ENCODE measurements at regions of chr16 and their contacts with region 1.

Region 1: GRCh38 chr16:86874141-86874540 is 295.8 kb downstream of the FOXL1 start:
- DNase-seq: peak; percentile 31
- H3K4me3 ChIP-seq: no peak overlapping the region
- H3K27ac ChIP-seq: no peak overlapping the region
- H3K4me1 ChIP-seq: no peaks in the 10 kb centered on the region
- CTCF ChIP-seq: peak; percentile 80

Region 2: DNA sequence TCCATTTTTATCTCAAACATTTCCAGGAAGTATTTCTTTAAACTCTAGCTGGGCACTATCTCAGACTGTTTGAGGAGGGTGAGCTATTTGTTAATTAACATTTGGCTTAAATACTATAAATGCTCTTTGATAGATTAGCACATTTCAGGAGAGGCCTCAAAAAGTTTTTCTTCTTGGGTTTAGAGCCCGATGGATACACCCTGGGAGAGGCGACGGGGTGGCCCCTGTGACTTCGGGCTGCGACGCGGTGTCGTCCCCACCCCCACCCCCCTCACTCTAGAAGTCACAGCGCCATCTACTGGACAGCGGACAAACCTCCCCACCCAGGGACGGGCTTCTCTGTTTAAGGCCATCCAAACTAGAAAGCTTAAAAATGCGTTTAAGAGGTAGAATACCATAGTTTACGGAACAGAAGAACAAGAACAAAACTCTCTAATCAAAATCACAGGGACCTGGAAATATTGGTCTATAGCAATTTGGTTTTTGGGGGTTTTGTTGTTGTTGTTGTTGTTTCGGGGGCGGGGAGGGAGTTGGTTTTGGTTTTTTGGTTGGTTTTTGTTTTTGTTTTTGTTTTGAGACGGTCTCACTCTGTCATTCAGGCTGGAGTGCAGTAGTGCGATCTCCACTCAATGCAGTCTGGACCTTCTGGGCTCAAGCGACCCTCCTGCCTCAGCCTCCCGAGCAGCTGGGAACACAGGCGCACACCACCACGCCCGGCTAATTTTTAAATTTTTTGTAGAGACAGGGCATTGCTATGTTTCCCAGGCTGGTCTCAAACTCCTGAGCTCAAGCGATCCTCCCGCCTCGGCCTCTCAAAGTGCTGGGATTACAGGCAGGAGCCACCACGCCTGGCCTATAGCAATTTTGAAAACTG is 188.7 kb after region 1 on chr16:
- CTCF ChIA-PET with region 1: no interaction called
- POLR2A ChIA-PET with region 1: no interaction called
- intact Hi-C with region 1: loop called (anchors 1 kb)
- DNase-seq: peak; percentile 80
- H3K4me3 ChIP-seq: peak overlapping the region; percentile 71
- H3K27ac ChIP-seq: peak overlapping the region; percentile 89
- H3K4me1 ChIP-seq: peaks cover 65% of the 10 kb centered on the region
- CTCF ChIP-seq: peak; percentile 97